ENCODE measurements at regions of chrX and their contacts with region 1.

Region 1: DNA sequence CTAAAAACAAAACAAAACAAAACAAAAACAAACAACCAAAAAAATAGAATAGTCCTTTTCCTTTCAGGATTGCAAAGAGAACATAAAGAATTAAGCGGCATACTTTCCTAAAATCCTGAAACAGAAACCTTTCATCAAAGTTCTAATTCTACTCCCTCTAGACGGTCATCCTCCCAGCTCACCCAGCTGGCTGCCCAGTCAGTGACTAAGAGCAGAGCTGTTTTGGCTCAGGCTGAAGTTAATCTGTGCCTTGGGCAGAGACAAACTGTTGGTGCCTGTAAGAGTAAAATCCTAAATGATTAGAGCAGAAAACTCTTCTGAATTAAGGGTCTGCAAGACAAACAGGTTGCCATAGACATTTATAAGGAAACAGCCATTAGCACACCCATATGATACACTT is 17.6 kb upstream of the WAS start:
- DNase-seq: no peak
- ATAC-seq: no peak
- H3K4me3 ChIP-seq: no peak overlapping the region
- H3K27ac ChIP-seq: no peak overlapping the region
- H3K4me1 ChIP-seq: no peaks in the 10 kb centered on the region
- H3K27me3 ChIP-seq: no peaks in the 10 kb centered on the region
- CTCF ChIP-seq: no peak
- POLR2A ChIP-seq: no peak
- RAD21 ChIP-seq: no peak

Region 2: DNA sequence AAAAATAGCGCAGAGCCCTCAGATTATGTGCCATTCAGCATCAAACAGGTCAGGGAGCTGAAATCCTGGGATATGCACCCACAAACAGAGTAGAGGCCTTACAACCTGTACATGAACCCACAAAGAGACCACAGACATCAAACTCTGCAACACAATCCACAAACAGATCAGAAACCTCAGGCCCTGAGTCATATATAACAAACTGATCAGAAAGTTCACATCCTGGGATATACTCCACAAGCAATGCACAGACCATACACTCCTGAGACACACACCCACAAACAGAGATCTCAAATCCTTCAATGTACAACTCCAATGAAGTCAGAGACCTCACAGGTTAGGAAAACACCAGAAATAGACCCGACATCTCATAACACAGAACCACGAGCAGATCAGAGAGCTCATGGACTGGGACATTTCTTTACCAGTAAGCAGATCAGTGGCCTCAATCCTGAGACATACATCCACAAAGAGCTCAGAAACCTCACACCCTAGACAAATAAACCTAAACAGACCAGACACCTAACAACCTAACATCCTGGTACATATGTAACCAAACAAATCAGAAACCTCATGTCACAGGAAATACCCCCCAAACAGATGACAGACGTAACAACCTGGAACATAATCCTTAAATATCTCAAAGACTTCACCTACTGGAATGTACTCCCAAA is 54.7 kb after region 1 on chrX:
- CTCF ChIA-PET with region 1: no interaction called
- POLR2A ChIA-PET with region 1: no interaction called
- RAD21 ChIA-PET with region 1: no interaction called
- intact Hi-C with region 1: loop called (anchors 10 kb)
- DNase-seq: no peak
- ATAC-seq: no peak
- H3K4me3 ChIP-seq: no peak overlapping the region
- H3K27ac ChIP-seq: no peak overlapping the region
- H3K4me1 ChIP-seq: no peaks in the 10 kb centered on the region
- H3K27me3 ChIP-seq: no peaks in the 10 kb centered on the region
- CTCF ChIP-seq: no peak
- POLR2A ChIP-seq: no peak
- RAD21 ChIP-seq: no peak

Region 3: DNA sequence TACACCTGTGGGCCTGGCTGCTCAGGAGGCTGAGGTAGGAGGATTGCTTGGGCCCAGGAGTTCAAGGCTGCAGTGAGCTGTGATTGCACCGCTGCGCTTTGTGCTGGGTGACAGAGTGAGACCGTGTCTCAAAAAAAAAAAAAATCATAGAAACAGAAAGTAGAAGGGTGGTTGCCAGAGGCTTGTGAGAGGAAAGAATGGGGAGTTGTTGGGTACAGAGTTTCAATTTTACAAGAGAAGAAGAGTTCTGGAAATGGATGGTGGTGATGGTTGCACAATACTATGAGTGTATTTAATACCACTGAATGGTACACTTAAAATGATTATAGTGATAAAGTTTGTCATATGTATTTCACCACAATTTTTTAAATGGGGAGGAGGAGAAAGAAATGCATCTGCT is 85.4 kb after region 1 on chrX:
- CTCF ChIA-PET with region 1: no interaction called
- POLR2A ChIA-PET with region 1: no interaction called
- RAD21 ChIA-PET with region 1: no interaction called
- intact Hi-C with region 1: no loop called
- DNase-seq: no peak
- ATAC-seq: no peak
- H3K4me3 ChIP-seq: no peak overlapping the region
- H3K27ac ChIP-seq: no peak overlapping the region
- H3K4me1 ChIP-seq: no peaks in the 10 kb centered on the region
- H3K27me3 ChIP-seq: no peaks in the 10 kb centered on the region
- CTCF ChIP-seq: no peak
- POLR2A ChIP-seq: no peak
- RAD21 ChIP-seq: no peak

Region 4: GRCh38 chrX:48972220-48973167 is 306.5 kb after region 1 on chrX:
- CTCF ChIA-PET with region 1: no interaction called
- POLR2A ChIA-PET with region 1: no interaction called
- RAD21 ChIA-PET with region 1: no interaction called
- intact Hi-C with region 1: no loop called
- DNase-seq: peak; percentile 10
- ATAC-seq: peak; percentile 91
- H3K4me3 ChIP-seq: no peak overlapping the region
- H3K27ac ChIP-seq: no peak overlapping the region
- H3K4me1 ChIP-seq: peaks cover 0 to under 1% of the 10 kb centered on the region in 2 experiments; a peak in 1 of 4 replicates
- H3K27me3 ChIP-seq: no peaks in the 10 kb centered on the region
- CTCF ChIP-seq: peak; percentile 40 to 60 (median 58); a peak in 5 of 6 replicates
- POLR2A ChIP-seq: no peak
- RAD21 ChIP-seq: peak; percentile 43